Heart right ventricle (tissue), 16 donors: ENCODE measurements at regions of chr4 and their contacts with region 1.

Region 1: GRCh38 chr4:15729910-15730533 is 27.2 kb downstream of the BST1 start:
- DNase-seq: peak in 1 of 2 donors; percentile 15
- ATAC-seq: peak in 5 of 8 donors; percentile 33 to 72 (median 62)
- H3K4me3 ChIP-seq: no peak overlapping the region
- H3K27ac ChIP-seq: no peak overlapping the region
- H3K4me1 ChIP-seq: peaks cover 0 to 3% (median 0%) of the 10 kb centered on the region in 9 donors
- H3K27me3 ChIP-seq: no peaks in the 10 kb centered on the region
- CTCF ChIP-seq: peak; percentile 79 to 93 (median 90)

Region 2: DNA sequence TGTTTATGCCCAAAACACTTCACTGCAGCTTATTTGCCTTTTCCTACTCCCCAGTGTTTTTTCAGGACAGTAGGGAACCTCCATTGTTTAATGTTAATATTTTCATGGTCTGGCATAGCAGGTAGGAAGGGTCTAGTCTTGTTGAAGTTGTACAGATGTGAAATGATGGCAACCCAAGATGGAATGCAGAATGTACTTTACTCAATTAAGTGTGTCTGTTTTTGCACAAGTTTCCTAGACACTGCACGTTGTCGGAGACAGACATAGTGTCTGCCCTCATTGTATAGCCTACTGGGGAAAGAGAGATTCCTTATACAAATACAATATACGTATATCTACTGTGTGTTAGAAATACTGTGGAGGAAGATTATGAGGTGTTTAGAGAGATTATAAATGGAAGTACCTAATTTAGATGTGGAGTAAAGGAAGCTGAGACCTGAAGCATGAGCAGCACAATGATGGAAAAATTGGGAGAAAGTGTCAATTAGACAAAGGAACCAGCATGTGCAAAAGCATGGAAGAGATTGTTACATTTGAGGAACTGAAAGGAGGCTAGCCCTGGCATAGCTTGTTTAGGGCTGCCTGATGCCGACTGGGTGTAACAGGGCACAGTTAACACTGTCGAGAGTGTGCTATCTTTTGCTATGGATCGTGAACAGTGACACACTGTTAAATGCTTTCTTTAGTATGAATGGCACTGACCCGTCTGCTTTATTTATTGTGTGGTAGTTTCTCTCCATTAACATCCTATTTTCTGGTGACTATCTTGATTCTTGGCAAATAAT is 709.3 kb before region 1 on chr4:
- intact Hi-C with region 1: no loop called
- DNase-seq: no peak
- ATAC-seq: peak in 3 of 8 donors; percentile 54 to 63 (median 63)
- H3K4me3 ChIP-seq: no peak overlapping the region
- H3K27ac ChIP-seq: peak overlapping the region in 2 of 10 donors; percentile 1 to 11
- H3K4me1 ChIP-seq: peaks cover 0 to 50% (median 38%) of the 10 kb centered on the region in 9 donors
- H3K27me3 ChIP-seq: no peaks in the 10 kb centered on the region
- CTCF ChIP-seq: no peak

Region 3: DNA sequence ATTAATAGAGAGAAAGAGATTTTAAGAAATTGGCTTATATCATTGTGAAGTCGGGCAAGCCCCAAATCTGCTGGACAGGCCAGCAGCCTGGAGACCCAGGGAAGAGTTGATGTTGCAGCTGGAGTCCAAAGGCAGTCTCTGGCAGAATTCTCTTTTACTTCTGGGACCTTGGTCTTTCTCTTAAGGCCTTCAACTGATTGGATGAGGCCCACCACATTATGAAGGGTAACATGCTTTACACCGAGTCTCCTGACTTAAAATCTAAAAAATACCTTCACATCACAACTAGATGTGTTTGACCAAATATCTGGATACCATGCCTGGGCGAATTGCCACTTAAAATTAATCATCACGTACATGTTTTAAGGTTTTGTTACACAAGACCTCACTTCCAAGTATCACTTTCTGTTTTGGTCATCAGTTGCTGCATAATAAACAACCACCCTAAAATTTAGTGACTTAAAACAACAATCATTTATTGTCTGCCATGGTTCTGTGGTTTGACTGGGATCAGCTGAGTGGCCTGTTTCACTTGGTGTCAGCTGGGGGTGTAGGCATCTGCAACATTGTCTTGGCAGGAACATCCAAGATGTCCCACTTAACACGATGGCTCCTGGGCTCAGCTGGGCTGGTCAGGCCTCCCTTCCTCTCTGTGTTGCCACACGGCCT is 51.5 kb after region 1 on chr4:
- intact Hi-C with region 1: loop called in 1 of 10 experiments (anchors 5 kb)
- DNase-seq: no peak
- ATAC-seq: no peak
- H3K4me3 ChIP-seq: no peak overlapping the region
- H3K27ac ChIP-seq: peak overlapping the region in 1 of 10 donors; percentile 81
- H3K4me1 ChIP-seq: peaks cover 0 to 69% (median 20%) of the 10 kb centered on the region in 9 donors
- H3K27me3 ChIP-seq: peaks cover 0 to 5% (median 0%) of the 10 kb centered on the region in 7 donors
- CTCF ChIP-seq: no peak

Region 4: DNA sequence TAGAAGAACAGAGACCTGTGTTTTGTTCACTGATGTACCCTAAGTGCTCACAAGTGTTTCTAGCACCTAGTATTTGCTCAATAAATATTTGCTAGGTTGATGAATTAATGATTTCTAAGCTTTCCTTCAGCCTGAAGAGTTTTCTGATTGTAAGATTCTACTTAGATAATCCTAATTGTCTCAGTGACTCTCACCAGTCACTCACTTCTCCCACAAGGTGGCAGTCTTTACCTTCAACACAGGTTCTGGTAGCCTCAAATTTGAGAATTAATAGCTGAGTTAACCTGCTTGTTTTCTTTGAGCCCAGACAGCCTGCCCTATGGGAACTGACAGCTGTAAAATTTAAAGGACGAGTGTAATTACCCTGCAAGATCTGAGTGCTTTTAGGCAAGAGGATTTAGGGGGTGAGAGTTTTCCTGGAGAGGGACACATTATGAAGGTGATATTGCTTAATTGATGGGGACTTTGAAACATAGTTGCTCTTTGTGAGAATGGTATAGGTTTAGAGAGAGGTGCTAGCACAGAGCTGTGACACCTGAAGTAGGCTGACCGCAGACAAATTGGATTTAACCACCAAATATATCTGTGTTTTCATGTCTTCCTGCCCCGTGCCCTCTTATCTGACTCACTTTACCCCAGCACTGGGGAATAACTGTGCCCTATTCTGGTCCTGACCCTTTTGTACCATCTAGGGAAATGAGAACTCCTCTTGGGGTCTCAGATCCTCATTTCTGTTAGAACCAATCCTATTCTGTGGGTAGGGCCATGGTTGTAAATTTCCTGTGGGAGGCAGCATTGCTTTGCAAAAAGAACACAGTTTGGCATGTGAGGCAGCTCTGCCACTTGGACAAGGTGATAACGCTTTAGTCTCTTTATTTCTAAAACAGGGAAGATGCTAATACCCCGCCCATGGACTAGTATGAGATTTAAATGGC is 75.8 kb after region 1 on chr4:
- intact Hi-C with region 1: loop called in 2 of 10 experiments (anchors 2 to 5 kb)
- DNase-seq: peak in 1 of 2 donors; percentile 30
- ATAC-seq: peak in 7 of 8 donors; percentile 15 to 78 (median 67)
- H3K4me3 ChIP-seq: no peak overlapping the region
- H3K27ac ChIP-seq: no peak overlapping the region
- H3K4me1 ChIP-seq: peaks cover 0 to 29% (median 3%) of the 10 kb centered on the region in 9 donors
- H3K27me3 ChIP-seq: no peaks in the 10 kb centered on the region
- CTCF ChIP-seq: peak; percentile 47 to 78 (median 72)

Region 5: DNA sequence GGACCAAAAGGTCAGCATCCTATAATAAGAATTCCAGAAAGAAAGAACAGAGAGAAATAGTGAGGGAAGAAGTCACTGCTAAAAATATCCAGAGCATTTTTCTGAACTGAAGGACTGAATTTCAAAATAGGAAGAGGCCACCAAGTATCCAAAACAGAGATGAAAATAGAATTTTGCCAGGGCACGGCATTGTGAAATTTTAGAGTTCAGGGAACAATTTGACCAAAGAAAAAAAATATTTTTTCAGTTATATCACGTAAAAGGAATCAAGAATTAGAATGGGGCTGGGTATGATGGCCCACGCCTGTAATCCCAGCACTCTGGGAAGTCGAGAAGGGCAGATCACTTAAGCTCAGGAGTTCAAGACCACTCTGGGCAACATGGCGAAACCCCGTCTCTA is 143.1 kb after region 1 on chr4:
- intact Hi-C with region 1: loop called in 1 of 10 experiments (anchors 10 kb)
- DNase-seq: no peak
- ATAC-seq: peak in 3 of 8 donors; percentile 11 to 73 (median 49)
- H3K4me3 ChIP-seq: no peak overlapping the region
- H3K27ac ChIP-seq: peak overlapping the region in 5 of 10 donors; percentile 13 to 72 (median 22)
- H3K4me1 ChIP-seq: no peaks in the 10 kb centered on the region
- H3K27me3 ChIP-seq: peaks cover 0 to 3% (median 0%) of the 10 kb centered on the region in 7 donors
- CTCF ChIP-seq: no peak

Region 6: GRCh38 chr4:15956179-15956850 is 226.3 kb after region 1 on chr4:
- intact Hi-C with region 1: loop called in 9 of 10 experiments (anchors 2 to 5 kb)
- DNase-seq: peak; percentile 66 to 78
- ATAC-seq: peak; percentile 63 to 93 (median 78)
- H3K4me3 ChIP-seq: no peak overlapping the region
- H3K27ac ChIP-seq: no peak overlapping the region
- H3K4me1 ChIP-seq: peaks cover 0 to 5% (median 0%) of the 10 kb centered on the region in 9 donors
- H3K27me3 ChIP-seq: no peaks in the 10 kb centered on the region
- CTCF ChIP-seq: peak; percentile 75 to 94 (median 87)

Region 7: DNA sequence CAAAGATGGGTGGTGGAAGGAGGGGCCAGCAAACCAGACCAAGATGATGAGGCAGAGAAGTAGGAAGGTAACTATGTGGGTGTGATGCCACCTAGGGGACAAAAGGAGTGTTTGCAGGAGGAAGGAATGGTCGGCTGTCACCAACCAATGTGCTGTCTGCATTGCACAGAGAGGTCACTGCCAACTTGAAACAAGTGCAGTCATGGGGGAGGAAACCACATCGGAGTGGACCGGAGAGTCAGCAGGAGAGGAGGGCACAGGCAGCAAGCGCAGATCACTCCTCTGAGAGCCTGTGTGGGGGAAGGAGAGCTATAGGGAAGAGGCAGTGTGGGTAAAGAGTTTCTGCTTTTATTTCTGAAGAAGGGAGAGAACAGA is 271.4 kb after region 1 on chr4:
- intact Hi-C with region 1: loop called in 7 of 10 experiments (anchors 2 to 10 kb)
- DNase-seq: peak in 1 of 2 donors; percentile 55
- ATAC-seq: peak; percentile 84 to 95 (median 94)
- H3K4me3 ChIP-seq: no peak overlapping the region
- H3K27ac ChIP-seq: no peak overlapping the region
- H3K4me1 ChIP-seq: peaks cover 0 to 13% (median 4%) of the 10 kb centered on the region in 9 donors
- H3K27me3 ChIP-seq: no peaks in the 10 kb centered on the region
- CTCF ChIP-seq: peak; percentile 72 to 88 (median 85)

Region 8: GRCh38 chr4:16104520-16104919 is 374.5 kb after region 1 on chr4:
- intact Hi-C with region 1: no loop called
- DNase-seq: no peak
- ATAC-seq: peak in 6 of 8 donors; percentile 29 to 84 (median 81)
- H3K4me3 ChIP-seq: no peak overlapping the region
- H3K27ac ChIP-seq: peak overlapping the region in 5 of 10 donors; percentile 19 to 48 (median 30)
- H3K4me1 ChIP-seq: peaks cover 0 to 13% (median 4%) of the 10 kb centered on the region in 9 donors
- H3K27me3 ChIP-seq: peaks cover 0 to 5% (median 0%) of the 10 kb centered on the region in 7 donors
- CTCF ChIP-seq: no peak